Naive thymus-derived CD4-positive, alpha-beta T cell (primary cell): ENCODE measurements at regions of chr2 and their contacts with region 1.

Region 1: DNA sequence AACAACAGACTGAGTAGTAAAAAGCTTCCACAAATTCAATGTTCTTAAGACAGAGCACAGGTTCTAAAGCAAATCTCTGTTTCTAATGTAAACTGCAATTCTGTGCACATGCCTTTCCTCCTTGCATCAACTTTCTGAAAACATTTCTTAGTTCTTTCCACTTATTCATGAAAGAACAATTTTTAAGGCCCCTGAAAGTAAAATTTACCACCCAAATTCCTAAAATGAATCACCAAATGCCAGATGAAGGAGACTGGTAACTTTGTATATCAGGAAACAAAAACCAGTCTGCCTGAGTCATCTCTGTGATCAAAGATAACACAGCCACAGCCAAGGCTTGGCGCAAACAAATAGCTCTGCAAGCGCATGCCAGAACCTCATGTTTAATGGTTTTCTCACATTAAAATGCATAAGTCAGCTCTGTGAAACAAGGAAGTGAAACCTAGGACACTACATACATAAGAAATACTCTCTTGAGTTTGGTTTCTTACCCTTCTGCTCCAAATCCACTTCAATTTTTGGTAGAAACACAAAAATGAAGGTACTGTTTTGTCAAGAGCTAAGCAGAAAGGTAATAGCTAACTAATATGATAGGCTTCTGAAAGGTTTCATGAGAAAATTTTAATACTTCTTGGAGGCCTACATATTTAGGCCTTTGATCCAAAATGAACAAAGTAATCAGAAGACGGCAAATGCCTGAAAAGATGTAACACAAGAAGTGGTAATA is 169.4 kb downstream of the THADA start:
- DNase-seq: peak in 5 of 9 donors; percentile 4 to 56 (median 17)
- ATAC-seq: peak; percentile 94
- H3K4me3 ChIP-seq: no peak overlapping the region
- H3K4me3 Mint-ChIP-seq: peak overlapping the region in 4 of 10 donors; percentile 3 to 66 (median 5)
- H3K27ac ChIP-seq: no peak overlapping the region
- H3K27ac Mint-ChIP-seq: peak overlapping the region in 5 of 9 donors; percentile 0 to 89 (median 85)
- H3K4me1 ChIP-seq: peaks cover 0 to 35% of the 10 kb centered on the region in 2 donors
- H3K4me1 Mint-ChIP-seq: peaks cover 8 to 43% (median 30%) of the 10 kb centered on the region in 7 donors
- H3K27me3 ChIP-seq: no peaks in the 10 kb centered on the region
- H3K27me3 Mint-ChIP-seq: peaks cover 0 to 6% (median 0%) of the 10 kb centered on the region in 5 donors

Region 2: DNA sequence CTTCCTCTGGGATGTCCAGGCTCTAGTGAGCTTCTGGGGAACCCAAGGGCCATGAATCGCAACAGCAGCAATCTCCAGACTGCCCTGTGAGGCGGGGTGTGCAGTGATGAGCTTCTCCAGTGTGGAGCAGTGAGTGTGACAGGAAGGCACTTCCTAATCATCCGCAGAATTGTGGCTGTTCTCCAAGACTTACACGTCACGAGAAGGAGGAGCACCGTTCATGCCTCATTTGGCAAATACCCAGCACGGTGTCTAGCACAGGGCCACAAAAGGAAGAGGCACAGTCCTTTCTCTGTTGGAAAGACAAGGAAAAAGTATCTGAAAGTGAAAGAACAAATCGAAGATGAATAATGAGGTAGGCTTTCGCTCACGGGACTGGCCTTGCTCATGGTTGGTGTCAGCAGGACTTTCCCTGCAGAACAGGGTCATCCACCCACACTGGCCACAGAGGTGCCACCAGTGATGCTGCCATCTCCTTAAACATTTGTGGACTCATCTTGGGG is 509.0 kb before region 1 on chr2:
- CTCF ChIA-PET with region 1: no interaction called
- POLR2A ChIA-PET with region 1: no interaction called
- intact Hi-C with region 1: no loop called
- DNase-seq: no peak
- ATAC-seq: no peak
- H3K4me3 ChIP-seq: no peak overlapping the region
- H3K4me3 Mint-ChIP-seq: no peak overlapping the region
- H3K27ac ChIP-seq: no peak overlapping the region
- H3K27ac Mint-ChIP-seq: no peak overlapping the region
- H3K4me1 ChIP-seq: no peaks in the 10 kb centered on the region
- H3K4me1 Mint-ChIP-seq: peaks cover 0 to 10% (median 5%) of the 10 kb centered on the region in 7 donors
- H3K27me3 ChIP-seq: no peaks in the 10 kb centered on the region
- H3K27me3 Mint-ChIP-seq: peaks cover 0 to 3% (median 0%) of the 10 kb centered on the region in 5 donors

Region 3: DNA sequence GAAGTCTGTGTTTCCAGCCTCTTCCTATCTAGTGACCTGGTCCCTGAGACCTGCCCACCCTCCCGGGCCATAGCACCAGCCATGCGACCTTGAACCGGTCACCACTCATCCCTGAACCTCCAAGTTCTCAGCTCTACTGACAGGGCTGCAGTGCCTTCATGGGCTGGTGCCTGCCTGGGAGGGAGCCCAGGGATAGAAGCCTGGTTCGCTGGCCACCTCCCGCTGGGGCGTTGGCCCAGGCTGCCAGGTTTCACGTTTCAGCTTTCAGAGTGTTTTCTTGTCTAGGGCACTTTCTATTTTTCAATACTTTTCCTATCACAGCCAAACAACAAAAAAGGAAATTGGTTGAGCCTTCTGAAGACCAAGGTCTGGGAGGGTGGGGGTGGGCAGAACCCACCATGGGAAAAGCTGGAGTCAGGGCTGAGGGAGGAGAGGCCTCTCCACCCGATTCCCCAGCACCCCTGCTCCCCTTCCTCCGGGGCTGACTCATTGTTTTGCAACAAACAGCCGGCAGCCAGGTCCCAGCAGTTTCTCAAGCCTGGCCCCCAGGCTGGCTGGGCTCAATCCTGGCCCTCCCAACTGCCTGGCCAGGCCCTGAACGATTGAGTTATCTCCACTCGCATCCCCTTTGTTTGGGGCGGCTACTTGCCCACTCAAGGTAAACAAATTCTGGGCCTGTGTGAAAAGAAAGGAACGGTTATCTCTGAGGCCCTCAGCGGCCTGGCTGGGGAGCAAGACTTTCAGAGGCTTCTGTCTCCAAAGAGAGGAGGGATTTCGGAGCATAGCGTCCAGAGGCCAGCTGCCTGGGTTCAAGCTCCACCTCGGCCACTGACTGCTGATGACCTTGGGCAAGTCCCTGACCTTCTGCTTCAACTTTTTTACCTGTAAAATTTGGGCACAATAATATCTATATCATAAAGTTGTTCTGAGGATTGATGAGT is 247.6 kb before region 1 on chr2:
- CTCF ChIA-PET with region 1: no interaction called
- POLR2A ChIA-PET with region 1: no interaction called
- intact Hi-C with region 1: loop called in 1 of 2 experiments (anchors 1 kb)
- DNase-seq: peak in 1 of 9 donors; percentile 30
- ATAC-seq: no peak
- H3K4me3 ChIP-seq: peak overlapping the region; percentile 17
- H3K4me3 Mint-ChIP-seq: peak overlapping the region; percentile 53 to 79 (median 71)
- H3K27ac ChIP-seq: peak overlapping the region; percentile 66
- H3K27ac Mint-ChIP-seq: peak overlapping the region; percentile 94 to 99 (median 97)
- H3K4me1 ChIP-seq: peaks cover 49 to 70% of the 10 kb centered on the region in 2 donors
- H3K4me1 Mint-ChIP-seq: peaks cover 52 to 78% (median 75%) of the 10 kb centered on the region in 7 donors
- H3K27me3 ChIP-seq: no peaks in the 10 kb centered on the region
- H3K27me3 Mint-ChIP-seq: no peaks in the 10 kb centered on the region

Region 4: DNA sequence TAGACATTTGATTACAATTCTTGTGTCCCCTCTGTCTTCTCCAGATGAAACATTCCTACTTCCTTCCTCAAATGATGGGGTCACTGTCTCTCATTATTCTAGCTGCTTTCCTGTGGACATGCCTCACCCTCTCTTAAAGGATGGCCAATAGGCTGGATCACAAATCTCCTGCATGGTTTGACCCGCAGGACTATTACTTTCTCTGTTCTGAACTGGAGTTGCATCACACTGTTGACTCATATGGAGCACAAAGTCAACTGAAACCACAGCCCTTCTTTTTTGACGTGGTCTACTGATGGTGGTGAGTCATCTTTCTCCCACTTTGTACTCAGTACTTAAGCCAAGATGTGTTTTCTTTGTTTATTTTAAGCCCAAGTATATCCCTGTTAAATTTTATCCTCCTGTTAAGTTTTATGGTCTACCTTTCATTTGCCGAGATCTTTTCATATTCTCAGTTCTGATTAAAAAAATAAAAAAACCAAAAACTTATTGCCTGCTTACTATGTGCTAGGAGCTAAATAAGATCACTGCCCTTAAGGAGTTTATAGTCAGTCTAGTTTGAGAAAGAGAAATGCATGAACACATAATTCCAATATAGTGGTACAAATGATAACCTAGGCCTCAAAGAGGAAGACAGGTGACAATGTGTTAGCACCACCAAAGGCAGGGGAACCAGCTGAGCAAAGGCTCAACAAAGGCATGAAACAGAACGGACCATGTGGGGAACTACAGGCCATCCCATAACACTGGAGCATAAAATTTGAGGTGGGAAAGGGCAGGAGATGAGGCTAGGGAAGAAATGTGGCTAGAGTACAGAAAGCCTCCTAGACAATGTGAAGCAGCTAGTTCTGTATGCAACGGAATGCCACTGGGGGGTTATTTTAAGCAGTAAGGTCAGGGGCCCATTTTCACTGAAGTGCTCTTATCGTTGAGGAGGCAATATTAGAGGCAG is 132.4 kb before region 1 on chr2:
- CTCF ChIA-PET with region 1: no interaction called
- POLR2A ChIA-PET with region 1: no interaction called
- intact Hi-C with region 1: loop called in 1 of 2 experiments (anchors 1 kb)
- DNase-seq: peak in 1 of 9 donors; percentile 54
- ATAC-seq: peak; percentile 93
- H3K4me3 ChIP-seq: no peak overlapping the region
- H3K4me3 Mint-ChIP-seq: peak overlapping the region in 1 of 10 donors; percentile 46
- H3K27ac ChIP-seq: no peak overlapping the region
- H3K27ac Mint-ChIP-seq: peak overlapping the region in 5 of 9 donors; percentile 14 to 84 (median 51)
- H3K4me1 ChIP-seq: no peaks in the 10 kb centered on the region
- H3K4me1 Mint-ChIP-seq: peaks cover 0 to 25% (median 8%) of the 10 kb centered on the region in 7 donors
- H3K27me3 ChIP-seq: no peaks in the 10 kb centered on the region
- H3K27me3 Mint-ChIP-seq: no peaks in the 10 kb centered on the region